Activated naive CD4-positive, alpha-beta T cell treated with anti-CD3 and anti-CD28 coated beads for 36 hours (primary cell): ENCODE measurements at regions of chr1 and their contacts with region 1.

Region 1: DNA sequence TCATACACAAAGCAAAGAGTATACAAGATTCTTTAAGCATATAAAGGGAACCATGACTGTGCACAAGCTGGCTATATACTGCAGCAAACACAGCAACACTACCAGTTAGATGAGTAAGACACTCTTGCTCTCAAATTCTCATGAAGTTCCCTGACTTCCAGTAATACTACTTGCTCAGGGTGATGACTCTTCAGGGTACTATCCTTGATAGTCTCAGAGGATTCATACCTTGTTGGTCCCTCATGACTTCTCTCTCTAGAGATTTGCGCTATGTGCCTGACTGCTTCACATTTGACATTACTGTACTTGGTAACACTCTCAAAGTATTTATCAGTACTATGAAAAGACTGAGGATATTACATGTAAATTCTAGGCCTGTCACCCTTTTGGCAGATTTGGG is 159.8 kb upstream of the ZRANB2 start:
- DNase-seq: no peak
- H3K4me3 Mint-ChIP-seq: no peak overlapping the region
- H3K27ac Mint-ChIP-seq: no peak overlapping the region
- H3K4me1 Mint-ChIP-seq: no peaks in the 10 kb centered on the region
- H3K27me3 Mint-ChIP-seq: no peaks in the 10 kb centered on the region

Region 2: DNA sequence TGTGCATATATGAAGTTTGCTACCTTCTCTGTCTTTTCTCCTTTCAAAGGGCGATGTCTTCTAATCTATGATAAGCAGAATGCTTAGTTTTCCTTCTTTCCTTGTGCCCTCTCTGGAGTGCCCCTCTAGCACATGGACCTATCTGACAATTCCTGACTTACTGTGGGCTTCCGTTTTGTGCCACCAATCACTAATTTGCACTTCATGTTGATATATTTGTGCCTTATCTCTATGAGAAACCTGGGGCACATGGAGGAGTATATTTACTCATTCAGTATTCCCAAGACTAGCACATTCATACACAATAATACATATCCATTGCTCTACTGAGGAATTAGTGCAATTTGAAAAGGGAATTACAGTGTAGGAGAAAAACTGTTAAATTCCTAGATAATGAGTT is 631.8 kb before region 1 on chr1:
- CTCF ChIA-PET with region 1: no interaction called
- intact Hi-C with region 1: no loop called
- DNase-seq: no peak
- H3K4me3 Mint-ChIP-seq: no peak overlapping the region
- H3K27ac Mint-ChIP-seq: no peak overlapping the region
- H3K4me1 Mint-ChIP-seq: no peaks in the 10 kb centered on the region
- H3K27me3 Mint-ChIP-seq: peaks cover 6% of the 10 kb centered on the region

Region 3: GRCh38 chr1:71267220-71267619 is 26.6 kb after region 1 on chr1:
- CTCF ChIA-PET with region 1: no interaction called
- intact Hi-C with region 1: loop called (anchors 2 kb)
- DNase-seq: no peak
- H3K4me3 Mint-ChIP-seq: no peak overlapping the region
- H3K27ac Mint-ChIP-seq: no peak overlapping the region
- H3K4me1 Mint-ChIP-seq: no peaks in the 10 kb centered on the region
- H3K27me3 Mint-ChIP-seq: no peaks in the 10 kb centered on the region